ENCODE measurements at regions of chr10 and their contacts with region 1.

Region 1: GRCh38 chr10:102583435-102584417 is 60.6 kb upstream of the TRIM8 start:
- DNase-seq: peak; percentile 87
- ATAC-seq: peak; percentile 94

Region 2: GRCh38 chr10:102375250-102375649 is 208.5 kb before region 1 on chr10:
- intact Hi-C with region 1: no loop called
- DNase-seq: no peak
- ATAC-seq: no peak

Region 3: DNA sequence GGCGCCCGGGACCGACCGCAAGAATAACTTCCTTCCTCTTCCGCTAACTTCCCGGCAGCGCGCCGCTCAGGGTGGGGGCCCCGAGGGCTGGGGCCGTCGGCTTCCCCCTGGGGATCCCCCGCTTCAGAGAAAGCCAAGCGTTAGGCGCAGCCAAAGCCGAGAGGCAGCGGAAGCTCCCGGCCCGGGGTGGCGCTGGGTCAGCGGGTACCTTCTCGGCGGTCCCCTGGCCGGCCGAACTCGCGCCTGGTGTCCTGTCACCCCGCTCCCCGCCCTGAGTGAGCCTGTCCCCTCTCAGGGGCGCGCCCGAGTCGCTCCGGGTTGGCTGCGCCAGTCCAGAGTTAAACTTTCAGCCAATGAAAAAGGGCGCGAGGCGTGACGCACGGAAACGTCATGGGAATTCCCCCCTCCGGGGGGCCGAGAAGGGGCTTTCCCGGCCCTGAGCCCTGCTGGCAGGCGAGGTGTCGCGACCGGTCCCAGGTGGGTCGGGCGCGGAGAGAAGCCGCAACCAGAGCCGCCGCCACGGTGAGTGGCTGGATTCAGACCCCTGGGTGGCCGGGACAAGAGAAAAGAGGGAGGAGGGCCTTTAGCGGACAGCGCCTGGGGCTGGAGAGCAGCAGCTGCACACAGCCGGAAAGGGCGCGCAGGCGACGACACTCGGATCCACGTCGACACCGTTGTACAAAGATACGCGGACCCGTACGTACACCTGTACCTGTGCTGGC is 189.5 kb before region 1 on chr10:
- intact Hi-C with region 1: loop called (anchors 10 kb)
- DNase-seq: peak; percentile 97
- ATAC-seq: peak; percentile 93

Region 4: DNA sequence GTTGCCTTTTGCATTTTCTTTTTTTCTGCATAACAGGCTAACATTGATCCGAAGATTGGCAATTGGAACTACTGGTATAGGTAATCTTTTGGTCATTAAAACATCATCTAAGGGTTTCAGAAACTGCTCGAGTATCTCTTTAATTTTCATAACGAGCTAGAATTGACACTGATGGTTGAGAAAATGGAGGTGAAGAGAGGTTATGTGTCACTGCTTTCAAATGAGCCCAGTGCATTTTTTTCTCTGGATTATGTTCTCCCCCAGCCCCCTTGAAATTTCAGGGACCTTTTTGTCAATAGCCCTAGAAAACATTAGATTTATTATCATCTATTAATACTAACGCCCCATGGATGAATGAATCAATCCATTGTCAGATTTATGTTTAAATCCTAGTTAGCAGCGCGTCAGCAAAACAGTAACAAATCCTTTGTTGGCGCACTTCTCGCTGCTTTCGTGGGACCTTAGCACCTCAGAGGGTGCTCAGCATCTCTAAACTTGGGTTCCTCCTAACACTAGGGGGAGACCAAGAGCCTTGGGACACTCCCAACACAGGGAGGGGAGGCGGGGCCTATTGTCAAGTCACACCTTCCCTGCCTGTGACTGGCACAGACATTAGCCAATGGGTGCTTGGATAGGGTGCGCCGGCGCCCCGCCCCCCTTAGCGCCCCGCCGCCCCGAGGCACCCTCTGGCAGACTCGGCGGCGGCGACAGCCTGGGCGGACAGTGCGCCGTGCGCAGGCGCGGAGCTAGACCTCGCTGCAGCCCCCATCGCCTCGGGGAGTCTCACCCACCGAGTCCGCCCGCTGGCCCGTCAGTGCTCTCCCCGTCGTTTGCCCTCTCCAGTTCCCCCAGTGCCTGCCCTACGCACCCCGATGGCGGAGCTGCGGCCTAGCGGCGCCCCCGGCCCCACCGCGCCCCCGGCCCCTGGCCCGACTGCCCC is 80.2 kb before region 1 on chr10 and contains the start of gene SUFU:
- intact Hi-C with region 1: loop called (anchors 10 kb)
- DNase-seq: peak; percentile 98
- ATAC-seq: peak; percentile 84
- total RNA-seq, gene SUFU: 8.0 TPM

Region 5: DNA sequence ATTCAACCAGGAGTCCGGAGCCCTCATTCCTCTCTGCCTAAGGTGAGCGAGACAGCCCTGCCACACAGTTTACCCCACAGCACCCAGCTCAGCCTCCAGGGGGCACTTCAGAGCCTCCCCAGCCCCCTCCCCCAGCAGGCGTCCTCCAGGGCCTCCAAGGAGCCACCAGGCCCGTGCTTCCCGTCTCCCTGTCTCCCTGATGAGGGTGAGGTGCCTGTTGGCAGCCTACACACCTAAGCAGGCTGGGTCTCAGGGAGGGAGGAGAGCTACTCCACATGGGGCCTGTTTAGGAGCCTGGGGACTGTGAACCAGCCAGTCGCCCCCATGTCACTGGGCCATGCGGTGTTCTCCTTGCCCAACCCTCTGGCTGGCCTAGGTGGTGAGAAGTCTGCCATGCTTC is 31.6 kb after region 1 on chr10:
- intact Hi-C with region 1: no loop called
- DNase-seq: no peak
- ATAC-seq: no peak